Heart right ventricle (tissue), 16 donors: ENCODE measurements at regions of chr18 and their contacts with region 1.

Region 1: GRCh38 chr18:36464126-36464651 is 166.7 kb downstream of the FHOD3 start:
- DNase-seq: no peak
- ATAC-seq: peak; percentile 11 to 77 (median 44)
- H3K4me3 ChIP-seq: no peak overlapping the region
- H3K27ac ChIP-seq: peak overlapping the region in 9 of 10 donors; percentile 54 to 97 (median 79)
- H3K4me1 ChIP-seq: peaks cover 0 to 69% (median 40%) of the 10 kb centered on the region in 9 donors
- H3K27me3 ChIP-seq: no peaks in the 10 kb centered on the region
- CTCF ChIP-seq: no peak

Region 2: GRCh38 chr18:36302676-36303075 is 161.5 kb before region 1 on chr18:
- intact Hi-C with region 1: loop called in 4 of 10 experiments (anchors 5 to 10 kb)
- DNase-seq: no peak
- ATAC-seq: no peak
- H3K4me3 ChIP-seq: no peak overlapping the region
- H3K27ac ChIP-seq: peak overlapping the region in 3 of 10 donors; percentile 29 to 51 (median 41)
- H3K4me1 ChIP-seq: peaks cover 4 to 79% (median 35%) of the 10 kb centered on the region in 9 donors
- H3K27me3 ChIP-seq: peaks cover 0 to 50% (median 34%) of the 10 kb centered on the region in 7 donors
- CTCF ChIP-seq: no peak

Region 3: DNA sequence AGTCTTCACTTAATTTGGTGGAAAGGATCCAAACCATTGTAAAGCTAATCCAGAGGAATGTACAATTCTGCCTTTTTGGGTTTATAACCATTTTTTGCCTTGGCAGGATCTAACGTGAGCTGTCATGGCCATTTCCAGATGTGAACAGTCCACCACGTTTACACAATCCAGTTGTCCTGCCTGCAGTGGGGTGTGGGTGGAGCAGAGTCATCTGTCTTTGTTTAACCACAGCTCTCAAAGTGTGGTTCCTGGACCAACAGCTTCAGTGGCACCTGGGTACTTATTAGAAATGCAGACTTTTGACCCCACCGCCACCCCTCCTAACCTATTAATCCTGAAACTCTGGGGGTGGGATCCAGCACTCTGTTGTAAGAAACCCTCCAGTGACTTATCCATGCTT is 130.8 kb before region 1 on chr18:
- intact Hi-C with region 1: loop called in 2 of 10 experiments (anchors 5 to 10 kb)
- DNase-seq: no peak
- ATAC-seq: no peak
- H3K4me3 ChIP-seq: no peak overlapping the region
- H3K27ac ChIP-seq: peak overlapping the region in 5 of 10 donors; percentile 2 to 60 (median 31)
- H3K4me1 ChIP-seq: peaks cover 0 to 73% (median 27%) of the 10 kb centered on the region in 9 donors
- H3K27me3 ChIP-seq: peaks cover 0 to 3% (median 0%) of the 10 kb centered on the region in 7 donors
- CTCF ChIP-seq: no peak

Region 4: DNA sequence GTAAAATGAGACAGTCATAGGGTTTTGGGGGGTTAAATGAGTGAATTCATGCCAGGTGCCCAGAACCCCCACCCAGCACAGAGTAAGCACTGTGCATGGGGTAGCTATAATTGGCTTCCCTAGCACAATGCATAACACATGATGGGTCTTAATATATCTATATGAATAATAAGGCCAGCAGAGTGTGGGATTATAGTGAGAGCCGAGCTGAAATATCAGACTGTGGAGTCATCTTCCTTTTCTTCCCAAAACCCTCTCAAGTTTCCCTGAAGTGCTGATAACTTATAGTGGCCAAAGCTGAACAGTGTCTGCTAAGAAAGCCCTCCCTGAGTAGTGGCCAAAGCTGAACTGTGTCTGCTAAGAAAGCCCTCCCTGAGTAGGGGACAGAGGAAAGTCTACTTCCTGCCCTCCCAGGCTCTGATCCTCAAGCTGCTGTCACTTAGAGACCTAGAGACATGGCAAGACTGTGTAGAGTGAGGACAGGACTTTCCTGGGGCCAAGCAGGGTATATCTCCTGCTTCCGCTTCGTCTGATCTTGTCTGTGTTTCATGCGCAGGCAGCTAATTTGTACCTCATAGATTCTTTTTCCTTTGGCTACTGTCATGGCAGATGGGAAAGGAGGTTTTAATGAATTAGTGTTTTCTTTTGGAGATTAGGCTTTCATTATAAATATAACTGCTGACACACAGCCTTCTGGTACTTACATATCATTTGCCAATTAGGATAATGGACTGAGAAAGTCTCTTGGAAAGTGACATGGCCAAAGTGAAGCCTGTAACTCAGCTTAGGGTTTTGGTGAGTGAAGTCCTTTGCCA is 71.8 kb before region 1 on chr18:
- intact Hi-C with region 1: loop called in 3 of 10 experiments (anchors 5 to 10 kb)
- DNase-seq: no peak
- ATAC-seq: peak in 5 of 8 donors; percentile 3 to 35 (median 23)
- H3K4me3 ChIP-seq: no peak overlapping the region
- H3K27ac ChIP-seq: peak overlapping the region; percentile 43 to 88 (median 82)
- H3K4me1 ChIP-seq: peaks cover 0 to 74% (median 46%) of the 10 kb centered on the region in 9 donors
- H3K27me3 ChIP-seq: no peaks in the 10 kb centered on the region
- CTCF ChIP-seq: no peak

Region 5: GRCh38 chr18:36419905-36420531 is 44.2 kb before region 1 on chr18:
- intact Hi-C with region 1: no loop called
- DNase-seq: no peak
- ATAC-seq: peak in 7 of 8 donors; percentile 28 to 58 (median 45)
- H3K4me3 ChIP-seq: no peak overlapping the region
- H3K27ac ChIP-seq: peak overlapping the region in 9 of 10 donors; percentile 40 to 86 (median 79)
- H3K4me1 ChIP-seq: peaks cover 0 to 83% (median 28%) of the 10 kb centered on the region in 9 donors
- H3K27me3 ChIP-seq: no peaks in the 10 kb centered on the region
- CTCF ChIP-seq: peak in 1 of 9 donors; percentile 28

Region 6: GRCh38 chr18:36572135-36572856 is 108.1 kb after region 1 on chr18:
- intact Hi-C with region 1: loop called in 2 of 10 experiments (anchors 5 to 10 kb)
- DNase-seq: no peak
- ATAC-seq: peak; percentile 45 to 82 (median 68)
- H3K4me3 ChIP-seq: no peak overlapping the region
- H3K27ac ChIP-seq: peak overlapping the region in 5 of 10 donors; percentile 1 to 31 (median 7)
- H3K4me1 ChIP-seq: peaks cover 0 to 22% (median 5%) of the 10 kb centered on the region in 9 donors
- H3K27me3 ChIP-seq: no peaks in the 10 kb centered on the region
- CTCF ChIP-seq: peak in 8 of 9 donors; percentile 18 to 65 (median 54)